ENCODE measurements at regions of chr14 and their contacts with region 1.

Region 1: DNA sequence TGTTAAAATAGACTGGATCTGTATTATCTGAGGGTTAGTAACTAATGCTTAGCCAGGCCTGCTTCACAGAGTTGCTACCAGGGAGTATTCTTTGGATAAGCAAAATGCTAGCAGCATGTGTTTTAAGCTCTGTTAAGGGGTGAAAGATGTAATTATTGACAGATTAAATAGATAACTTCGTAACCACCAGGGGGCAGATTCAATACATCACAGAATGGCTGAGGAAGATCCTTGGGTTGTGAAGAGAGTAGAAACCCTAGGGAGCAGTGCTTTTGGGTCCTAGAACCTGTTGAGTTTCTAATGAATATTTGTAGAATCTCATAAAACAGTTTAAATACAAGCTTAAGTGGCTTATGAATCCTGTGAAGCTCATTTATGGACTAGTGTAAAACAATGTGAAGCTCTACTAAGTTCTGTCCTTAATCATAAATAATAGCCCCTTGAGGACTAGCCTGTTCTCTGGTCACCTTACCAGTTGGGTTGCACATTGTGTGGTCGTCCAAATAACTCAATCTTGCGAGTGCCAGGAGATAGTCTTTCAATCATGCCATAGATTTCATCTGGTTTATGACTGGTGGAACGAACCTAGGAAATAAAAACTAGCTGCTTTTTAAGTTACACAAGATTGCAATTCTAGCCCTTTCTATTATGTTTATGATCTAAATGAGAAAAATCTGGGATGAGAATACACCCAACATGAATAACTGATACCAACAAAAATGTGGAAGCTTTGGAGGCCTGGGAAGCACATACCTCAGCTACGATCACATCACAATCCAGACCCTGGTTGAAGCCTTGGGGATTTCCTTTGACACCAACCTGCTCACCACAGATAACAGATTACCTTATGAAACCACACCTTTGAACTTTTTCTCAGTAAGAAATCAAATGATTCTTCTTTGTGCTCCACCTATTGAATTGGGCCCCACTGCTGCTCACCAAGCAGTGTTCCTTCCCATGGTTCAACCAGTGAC is 12.3 kb downstream of the METTL3 start:
- DNase-seq: peak; percentile 50 to 65 (median 58)
- H3K4me3 ChIP-seq: no peak overlapping the region
- H3K4me3 Mint-ChIP-seq: peak overlapping the region in 5 of 8 donors; percentile 2 to 75 (median 41)
- H3K27ac ChIP-seq: peak overlapping the region; percentile 55
- H3K27ac Mint-ChIP-seq: peak overlapping the region; percentile 55 to 92 (median 82)
- H3K4me1 ChIP-seq: peaks cover 15% of the 10 kb centered on the region
- H3K4me1 Mint-ChIP-seq: peaks cover 18 to 43% (median 22%) of the 10 kb centered on the region in 4 donors
- H3K27me3 ChIP-seq: no peaks in the 10 kb centered on the region
- H3K27me3 Mint-ChIP-seq: no peaks in the 10 kb centered on the region

Region 2: DNA sequence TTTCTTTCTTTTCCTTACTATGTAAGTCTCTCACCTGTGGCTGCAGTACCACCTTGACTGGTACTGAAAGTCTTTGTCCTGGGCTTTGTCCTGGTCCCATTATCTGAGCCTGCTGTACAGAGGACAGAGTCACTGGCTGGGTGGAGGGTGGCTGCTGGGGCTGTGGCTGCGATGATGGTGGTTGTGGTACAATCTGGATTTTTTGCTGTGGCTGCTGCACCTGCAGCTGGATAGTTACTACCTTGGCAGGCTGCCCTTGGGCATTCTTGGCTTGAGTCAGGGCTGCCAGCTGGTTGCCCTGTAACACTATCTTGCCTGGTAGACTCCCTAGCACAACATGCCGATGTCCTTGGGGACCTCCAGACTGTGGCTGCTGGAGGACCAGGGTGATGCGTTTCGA is 69.9 kb before region 1 on chr14:
- CTCF ChIA-PET with region 1: no interaction called
- POLR2A ChIA-PET with region 1: no interaction called
- intact Hi-C with region 1: no loop called
- DNase-seq: no peak
- H3K4me3 ChIP-seq: no peak overlapping the region
- H3K4me3 Mint-ChIP-seq: no peak overlapping the region
- H3K27ac ChIP-seq: no peak overlapping the region
- H3K27ac Mint-ChIP-seq: peak overlapping the region in 1 of 7 donors; percentile 42
- H3K4me1 ChIP-seq: peaks cover 8% of the 10 kb centered on the region
- H3K4me1 Mint-ChIP-seq: peaks cover 14 to 21% (median 17%) of the 10 kb centered on the region in 4 donors
- H3K27me3 ChIP-seq: no peaks in the 10 kb centered on the region
- H3K27me3 Mint-ChIP-seq: no peaks in the 10 kb centered on the region

Region 3: DNA sequence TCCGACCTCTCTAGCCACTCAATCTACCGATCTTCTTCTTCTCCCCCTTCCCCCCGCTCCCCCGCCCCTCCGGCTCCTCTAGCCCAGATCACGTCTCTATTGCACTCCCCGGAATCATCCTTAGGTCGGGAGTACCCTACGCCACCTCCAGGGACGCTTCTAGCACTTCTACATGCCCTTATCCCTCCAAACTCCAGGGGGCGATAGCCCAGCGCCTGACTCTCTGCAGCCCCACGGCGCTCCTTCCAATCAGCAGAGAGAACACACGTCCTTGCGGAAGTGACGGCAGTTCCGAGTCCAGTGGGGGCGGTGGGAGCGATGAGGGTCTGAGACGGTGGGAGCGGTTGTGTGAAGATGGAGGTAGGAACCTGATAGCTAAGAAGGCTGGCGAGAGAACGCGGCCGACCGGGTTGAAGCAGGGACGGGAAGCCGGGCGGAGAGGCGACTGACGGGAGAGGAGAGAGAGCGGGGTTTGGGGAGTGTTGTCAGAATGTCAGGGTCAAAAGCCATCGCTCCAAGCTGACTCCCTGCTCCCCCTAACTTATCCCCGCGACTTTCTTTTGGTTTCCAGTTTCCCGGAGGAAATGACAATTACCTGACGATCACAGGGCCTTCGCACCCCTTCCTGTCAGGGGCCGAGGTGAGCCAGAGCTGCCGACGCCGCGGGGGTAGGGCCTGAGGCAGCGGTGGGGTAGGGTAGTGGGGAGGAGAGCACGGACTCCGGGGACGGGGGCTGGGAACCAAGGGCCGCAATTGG is 21.7 kb before region 1 on chr14 and contains the starts of genes RAB2B and TOX4:
- CTCF ChIA-PET with region 1: interaction called, 25 read pairs
- POLR2A ChIA-PET with region 1: interaction called, 18 read pairs
- intact Hi-C with region 1: no loop called
- DNase-seq: peak; percentile 98
- H3K4me3 ChIP-seq: peak within 1 kb of the TSS; percentile 69 to 97
- H3K4me3 Mint-ChIP-seq: peak within 1 kb of the TSS; percentile 98 to 100 (median 100)
- H3K27ac ChIP-seq: peak within 1 kb of the TSS; percentile 81
- H3K27ac Mint-ChIP-seq: peak within 1 kb of the TSS; percentile 95 to 100 (median 100)
- H3K4me1 ChIP-seq: peaks cover 27% of the 10 kb centered on the region
- H3K4me1 Mint-ChIP-seq: peaks cover 28 to 63% (median 45%) of the 10 kb centered on the region in 4 donors
- H3K27me3 ChIP-seq: no peaks in the 10 kb centered on the region
- H3K27me3 Mint-ChIP-seq: no peaks in the 10 kb centered on the region
- total RNA-seq, gene RAB2B: 29.3 to 30.4 TPM
- total RNA-seq, gene TOX4: 83.6 to 86.0 TPM

Region 4: GRCh38 chr14:21486640-21487087 is 12.2 kb before region 1 on chr14:
- CTCF ChIA-PET with region 1: interaction called, 28 read pairs
- POLR2A ChIA-PET with region 1: interaction called, 5 read pairs
- intact Hi-C with region 1: no loop called
- DNase-seq: no peak
- H3K4me3 ChIP-seq: no peak overlapping the region
- H3K4me3 Mint-ChIP-seq: no peak overlapping the region
- H3K27ac ChIP-seq: no peak overlapping the region
- H3K27ac Mint-ChIP-seq: no peak overlapping the region
- H3K4me1 ChIP-seq: no peaks in the 10 kb centered on the region
- H3K4me1 Mint-ChIP-seq: peaks cover 1 to 8% (median 3%) of the 10 kb centered on the region in 4 donors
- H3K27me3 ChIP-seq: no peaks in the 10 kb centered on the region
- H3K27me3 Mint-ChIP-seq: no peaks in the 10 kb centered on the region

Region 5: DNA sequence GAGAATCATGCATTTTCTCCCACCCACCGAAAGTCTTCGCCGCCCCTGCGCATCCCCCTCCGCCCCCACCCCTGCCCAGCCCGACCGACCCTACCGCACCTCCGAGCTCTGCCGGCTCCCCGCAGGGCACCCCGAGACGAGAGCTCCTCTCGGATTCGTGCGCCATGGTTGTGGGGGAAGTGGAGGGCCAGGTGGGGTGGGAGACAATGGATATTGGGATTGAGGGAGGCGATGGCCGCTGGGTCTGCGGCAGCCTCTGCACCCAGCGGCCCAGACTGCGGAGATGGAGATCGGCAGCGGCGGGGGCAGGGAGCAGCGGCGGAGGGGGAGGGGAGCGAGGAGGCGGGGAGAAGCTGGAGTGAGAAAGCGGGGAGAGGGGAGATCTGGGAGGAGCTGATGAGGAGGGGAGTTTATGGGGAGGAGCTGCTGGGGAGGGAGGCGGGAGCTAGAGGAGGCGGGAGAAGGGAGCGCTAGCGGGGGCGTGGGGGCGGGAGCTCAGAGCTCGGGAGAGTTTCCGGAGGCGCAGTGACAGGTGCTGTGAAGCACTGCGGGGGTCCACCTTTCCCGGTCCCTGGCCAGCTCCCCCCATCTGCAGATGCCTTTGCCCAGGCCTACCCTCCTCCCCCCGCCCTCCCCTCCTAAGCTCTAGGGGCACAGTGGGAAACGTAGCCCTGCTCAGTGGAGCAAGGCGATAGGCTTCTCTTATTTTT is 27.3 kb after region 1 on chr14 and contains the start of gene SALL2:
- CTCF ChIA-PET with region 1: interaction called, 24 read pairs
- POLR2A ChIA-PET with region 1: interaction called, 6 read pairs
- intact Hi-C with region 1: no loop called
- DNase-seq: peak; percentile 44 to 78 (median 45)
- H3K4me3 ChIP-seq: peak within 1 kb of the TSS; percentile 42 to 67
- H3K4me3 Mint-ChIP-seq: peak within 1 kb of the TSS; percentile 81 to 90 (median 84)
- H3K27ac ChIP-seq: peak within 1 kb of the TSS; percentile 43
- H3K27ac Mint-ChIP-seq: peak within 1 kb of the TSS; percentile 21 to 92 (median 81)
- H3K4me1 ChIP-seq: peaks cover 15% of the 10 kb centered on the region
- H3K4me1 Mint-ChIP-seq: peaks cover 7 to 20% (median 11%) of the 10 kb centered on the region in 4 donors
- H3K27me3 ChIP-seq: no peaks in the 10 kb centered on the region
- H3K27me3 Mint-ChIP-seq: no peaks in the 10 kb centered on the region
- total RNA-seq, gene SALL2: 6.5 to 6.6 TPM

Region 6: GRCh38 chr14:21536418-21537089 is 37.7 kb after region 1 on chr14:
- CTCF ChIA-PET with region 1: interaction called, 13 read pairs
- POLR2A ChIA-PET with region 1: no interaction called
- intact Hi-C with region 1: no loop called
- DNase-seq: no peak
- H3K4me3 ChIP-seq: no peak overlapping the region
- H3K4me3 Mint-ChIP-seq: peak overlapping the region in 3 of 8 donors; percentile 17 to 34 (median 33)
- H3K27ac ChIP-seq: no peak overlapping the region
- H3K27ac Mint-ChIP-seq: no peak overlapping the region
- H3K4me1 ChIP-seq: no peaks in the 10 kb centered on the region
- H3K4me1 Mint-ChIP-seq: peaks cover 5 to 13% (median 6%) of the 10 kb centered on the region in 4 donors
- H3K27me3 ChIP-seq: peaks cover 14% of the 10 kb centered on the region
- H3K27me3 Mint-ChIP-seq: peaks cover 35 to 41% of the 10 kb centered on the region in 2 donors

Region 7: DNA sequence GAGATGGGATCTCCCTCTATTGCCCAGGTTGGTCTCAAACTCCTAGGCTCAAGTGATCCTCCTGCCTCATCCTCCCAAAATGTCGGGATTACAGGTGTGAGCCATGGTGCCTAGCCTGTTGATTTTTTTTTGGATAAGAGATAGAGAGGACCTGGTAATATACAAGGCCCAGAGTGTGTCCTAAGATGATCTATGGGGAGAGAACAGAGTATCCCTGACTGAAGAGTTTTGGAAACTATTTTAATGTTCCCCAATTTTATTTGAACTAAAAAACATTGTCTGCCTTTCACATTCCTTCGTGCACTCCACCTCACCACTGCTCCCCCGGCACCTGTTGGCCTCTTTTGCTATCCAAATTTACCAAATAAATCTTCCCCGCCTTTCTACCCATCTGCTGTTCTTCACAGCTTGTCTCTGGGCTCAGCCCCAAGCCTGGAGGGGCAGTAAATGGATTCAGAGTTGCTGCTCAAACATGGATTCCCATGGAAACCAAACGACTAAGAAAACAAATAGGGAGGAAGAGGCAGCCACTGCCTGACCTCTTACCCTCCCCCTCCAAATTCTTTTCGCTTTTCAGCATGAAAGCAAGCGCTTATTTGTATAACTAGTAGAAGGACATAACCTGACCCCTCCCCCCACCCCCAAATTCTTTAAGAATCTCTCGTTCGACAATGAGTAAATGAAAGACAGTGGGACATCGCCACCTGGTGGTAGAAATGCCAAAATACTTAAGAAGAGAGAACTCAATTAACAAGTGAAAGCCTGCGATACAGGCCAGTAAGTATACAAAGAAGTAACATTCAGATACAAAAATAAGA is 58.5 kb after region 1 on chr14:
- CTCF ChIA-PET with region 1: interaction called, 146 read pairs
- POLR2A ChIA-PET with region 1: interaction called, 6 read pairs
- intact Hi-C with region 1: loop called (anchors 1 kb)
- DNase-seq: peak; percentile 71 to 77 (median 75)
- H3K4me3 ChIP-seq: peak overlapping the region in 1 of 2 donors; percentile 35
- H3K4me3 Mint-ChIP-seq: peak overlapping the region in 7 of 8 donors; percentile 0 to 58 (median 6)
- H3K27ac ChIP-seq: no peak overlapping the region
- H3K27ac Mint-ChIP-seq: peak overlapping the region in 5 of 7 donors; percentile 3 to 90 (median 83)
- H3K4me1 ChIP-seq: peaks cover 6% of the 10 kb centered on the region
- H3K4me1 Mint-ChIP-seq: peaks cover 4 to 11% (median 6%) of the 10 kb centered on the region in 4 donors
- H3K27me3 ChIP-seq: no peaks in the 10 kb centered on the region
- H3K27me3 Mint-ChIP-seq: no peaks in the 10 kb centered on the region

Region 8: DNA sequence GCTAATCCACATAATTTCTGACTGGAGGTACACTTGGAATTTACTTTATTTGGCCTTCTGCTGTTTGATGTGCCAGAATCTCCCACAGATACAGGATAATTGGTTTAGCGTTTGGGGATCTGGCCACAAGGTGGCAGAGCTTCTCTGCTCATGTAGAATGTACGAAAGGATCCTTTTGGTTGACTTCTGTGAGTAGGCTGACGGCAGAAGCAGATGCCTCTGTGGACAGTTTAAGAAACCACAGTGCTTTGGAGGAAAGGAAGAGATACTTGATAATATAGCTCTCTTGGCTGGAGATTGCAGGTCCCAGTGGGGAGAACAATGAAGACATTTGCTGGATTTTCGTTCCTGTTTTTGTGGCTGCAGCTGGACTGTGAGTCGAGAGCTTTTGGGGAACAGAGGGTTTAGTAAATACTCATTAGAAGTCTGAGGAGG is 250.0 kb after region 1 on chr14:
- CTCF ChIA-PET with region 1: no interaction called
- POLR2A ChIA-PET with region 1: no interaction called
- intact Hi-C with region 1: no loop called
- DNase-seq: peak; percentile 48 to 54 (median 50)
- H3K4me3 ChIP-seq: no peak overlapping the region
- H3K4me3 Mint-ChIP-seq: peak overlapping the region; percentile 18 to 78 (median 62)
- H3K27ac ChIP-seq: no peak overlapping the region
- H3K27ac Mint-ChIP-seq: peak overlapping the region in 6 of 7 donors; percentile 26 to 82 (median 50)
- H3K4me1 ChIP-seq: no peaks in the 10 kb centered on the region
- H3K4me1 Mint-ChIP-seq: peaks cover 6 to 9% (median 8%) of the 10 kb centered on the region in 4 donors
- H3K27me3 ChIP-seq: no peaks in the 10 kb centered on the region
- H3K27me3 Mint-ChIP-seq: peaks cover 12 to 19% of the 10 kb centered on the region in 2 donors

Region 9: GRCh38 chr14:22095860-22096513 is 597.1 kb after region 1 on chr14:
- CTCF ChIA-PET with region 1: no interaction called
- POLR2A ChIA-PET with region 1: no interaction called
- intact Hi-C with region 1: no loop called
- DNase-seq: peak in 3 of 5 donors; percentile 28 to 57 (median 37)
- H3K4me3 ChIP-seq: no peak overlapping the region
- H3K4me3 Mint-ChIP-seq: peak overlapping the region; percentile 66 to 85 (median 77)
- H3K27ac ChIP-seq: peak overlapping the region; percentile 31
- H3K27ac Mint-ChIP-seq: peak overlapping the region; percentile 72 to 93 (median 87)
- H3K4me1 ChIP-seq: peaks cover 51% of the 10 kb centered on the region
- H3K4me1 Mint-ChIP-seq: peaks cover 20 to 45% (median 32%) of the 10 kb centered on the region in 4 donors
- H3K27me3 ChIP-seq: no peaks in the 10 kb centered on the region
- H3K27me3 Mint-ChIP-seq: no peaks in the 10 kb centered on the region